OCI-LY7 (cell line): ENCODE measurements at regions of chr9 and their contacts with region 1.

Region 1: GRCh38 chr9:132439153-132439552 is 29.1 kb downstream of the CFAP77 start:
- DNase-seq: no peak
- H3K4me3 ChIP-seq: no peak overlapping the region
- H3K27ac ChIP-seq: no peak overlapping the region
- H3K4me1 ChIP-seq: no peaks in the 10 kb centered on the region
- CTCF ChIP-seq: no peak

Region 2: DNA sequence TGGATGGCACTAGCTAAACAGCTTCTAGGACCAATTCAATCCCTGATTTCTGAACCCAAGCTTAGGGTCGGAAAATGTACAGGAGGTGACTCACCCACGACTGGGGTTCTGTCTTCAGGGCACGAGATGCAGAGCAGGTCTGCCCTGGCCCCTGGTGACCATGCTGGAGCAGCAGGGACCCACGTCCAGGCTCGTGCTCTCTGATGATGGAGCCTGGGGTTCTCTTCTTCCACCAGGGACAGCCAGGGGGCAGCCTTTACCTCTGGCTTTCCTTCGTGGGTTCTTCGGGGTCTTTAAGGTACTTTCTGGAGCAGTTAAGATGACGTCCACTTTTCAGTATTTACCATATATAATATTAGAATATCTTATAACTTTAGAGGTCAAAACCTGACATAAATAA is 27.1 kb before region 1 on chr9:
- CTCF ChIA-PET with region 1: no interaction called
- POLR2A ChIA-PET with region 1: interaction called, 10 read pairs
- intact Hi-C with region 1: no loop called
- DNase-seq: peak; percentile 27
- H3K4me3 ChIP-seq: no peak overlapping the region
- H3K27ac ChIP-seq: no peak overlapping the region
- H3K4me1 ChIP-seq: peaks cover 31% of the 10 kb centered on the region
- CTCF ChIP-seq: peak; percentile 78

Region 3: DNA sequence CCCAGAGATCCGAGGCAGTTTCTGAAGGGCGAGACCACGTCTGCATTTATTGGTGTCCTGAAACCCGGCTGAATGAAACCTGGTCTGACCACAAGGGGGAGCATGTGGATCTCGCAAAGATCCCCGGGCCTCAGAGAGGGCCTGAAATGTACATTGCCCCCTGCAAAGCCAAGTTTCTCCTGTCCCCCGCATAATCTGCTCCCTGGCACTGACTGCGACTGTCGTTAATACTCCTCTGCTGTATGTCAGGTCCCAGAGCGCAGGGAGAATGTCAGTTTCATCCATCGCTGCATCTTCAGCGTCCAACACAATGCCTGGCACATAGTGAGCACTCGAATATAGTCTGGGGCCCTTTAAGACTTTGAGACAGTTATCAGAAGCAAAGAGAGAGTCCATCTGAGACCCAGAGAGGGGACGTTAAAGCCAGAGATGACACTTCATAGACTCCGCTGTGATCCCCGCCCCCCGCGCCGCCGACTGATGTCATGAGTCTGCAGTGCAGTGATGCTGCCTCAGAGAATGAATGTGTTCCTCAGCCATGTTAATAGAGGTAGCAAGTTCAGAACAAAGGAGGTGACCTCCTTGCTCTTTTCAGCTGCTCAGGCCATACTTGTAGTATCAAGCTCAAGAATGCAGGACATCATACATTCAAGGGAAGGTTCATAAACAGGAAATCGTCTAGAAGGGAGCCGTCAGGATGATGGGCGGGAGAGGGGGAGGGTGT is 68.8 kb after region 1 on chr9:
- CTCF ChIA-PET with region 1: no interaction called
- POLR2A ChIA-PET with region 1: no interaction called
- intact Hi-C with region 1: no loop called
- DNase-seq: peak; percentile 77
- H3K4me3 ChIP-seq: no peak overlapping the region
- H3K27ac ChIP-seq: no peak overlapping the region
- H3K4me1 ChIP-seq: no peaks in the 10 kb centered on the region
- CTCF ChIP-seq: peak; percentile 91